ENCODE measurements at regions of chr17 and their contacts with region 1.

Region 1: DNA sequence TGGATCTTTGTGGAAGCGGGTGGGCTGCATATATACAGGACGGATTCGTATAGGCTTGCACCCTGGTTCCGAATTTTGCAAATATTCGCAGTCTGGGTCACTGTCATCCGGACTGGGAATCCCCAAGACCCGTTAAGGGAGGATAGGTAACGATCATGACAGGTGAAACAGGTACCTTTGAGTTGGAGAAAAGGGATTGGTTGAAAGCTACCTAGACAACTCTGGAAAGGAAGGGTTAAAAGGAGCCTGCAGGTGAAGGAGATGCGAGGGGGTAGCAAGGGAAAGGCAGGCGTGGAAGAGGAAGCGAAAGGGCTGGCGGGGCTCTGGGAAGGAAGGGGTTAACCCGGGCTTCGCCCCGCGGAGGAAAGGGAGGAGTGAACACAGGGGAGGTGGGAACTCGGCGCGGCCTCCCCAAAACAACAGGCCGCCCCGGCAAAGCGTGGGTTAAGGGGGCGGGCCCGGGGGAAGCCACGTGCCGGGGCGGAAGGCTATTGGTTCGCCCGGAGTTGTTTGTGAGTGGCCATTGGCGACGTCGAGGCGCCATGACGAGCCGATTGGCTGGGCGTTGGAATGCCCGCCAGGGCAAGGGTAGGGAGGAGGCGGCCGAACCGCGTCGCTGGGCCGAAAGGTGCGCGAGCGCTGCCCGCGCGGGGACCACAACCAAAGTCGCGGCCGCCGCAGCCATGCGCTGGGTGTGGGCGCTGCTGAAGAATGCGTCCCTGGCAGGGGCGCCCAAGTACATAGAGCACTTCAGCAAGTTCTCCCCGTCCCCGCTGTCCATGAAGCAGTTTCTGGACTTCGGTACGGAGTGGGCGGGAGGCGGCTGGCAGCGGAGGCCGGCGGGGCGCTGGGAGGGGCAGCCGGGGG is at the start of gene PDK2:
- DNase-seq: peak; percentile 97
- H3K4me3 Mint-ChIP-seq: peak within 1 kb of the TSS; percentile 85
- H3K27ac Mint-ChIP-seq: peak within 1 kb of the TSS; percentile 88
- H3K4me1 Mint-ChIP-seq: peaks cover 23% of the 10 kb centered on the region
- H3K27me3 Mint-ChIP-seq: peaks cover 2% of the 10 kb centered on the region
- total RNA-seq, gene PDK2: 13.7 and 16.9 TPM in 2 replicates

Region 2: DNA sequence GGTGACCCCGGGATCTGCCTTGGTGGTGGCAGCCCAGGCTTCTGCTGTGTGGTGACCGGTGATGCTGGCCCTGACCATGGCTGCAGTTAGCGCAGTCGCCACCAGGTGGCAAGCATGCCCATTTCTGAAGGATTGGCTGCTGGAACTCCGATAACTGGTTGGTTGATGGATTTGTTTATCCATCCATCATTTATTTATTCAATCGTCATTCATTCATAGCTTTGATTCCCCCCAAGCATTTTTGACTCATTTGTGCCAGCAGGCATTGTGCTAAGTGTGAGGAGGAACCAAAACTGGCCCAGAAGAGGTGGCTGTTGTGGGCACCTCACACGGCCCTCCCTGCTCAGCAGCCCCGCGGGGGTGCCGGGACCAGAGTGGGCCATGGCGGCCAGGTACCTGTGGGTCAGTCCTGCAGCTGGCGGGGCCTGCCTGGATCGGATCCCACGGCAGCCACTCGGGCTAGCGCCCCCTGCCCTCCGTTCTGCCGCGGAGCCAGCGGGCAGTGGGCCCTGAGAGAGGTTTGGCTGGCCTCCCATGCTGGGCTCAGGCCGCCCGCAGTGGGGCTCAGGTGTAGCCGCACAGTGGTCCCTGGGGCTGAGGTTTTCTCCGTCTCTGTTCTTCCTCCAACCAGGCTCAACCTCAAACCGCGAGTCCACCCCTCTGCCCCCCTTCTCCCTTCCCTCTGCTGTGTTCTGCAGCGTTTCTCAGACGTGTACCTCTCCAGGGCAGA is 67.9 kb before region 1 on chr17:
- intact Hi-C with region 1: loop called (anchors 2 kb)
- DNase-seq: peak; percentile 61
- H3K4me3 Mint-ChIP-seq: peak overlapping the region; percentile 75
- H3K27ac Mint-ChIP-seq: no peak overlapping the region
- H3K4me1 Mint-ChIP-seq: peaks cover 9% of the 10 kb centered on the region
- H3K27me3 Mint-ChIP-seq: peaks cover 9% of the 10 kb centered on the region

Region 3: DNA sequence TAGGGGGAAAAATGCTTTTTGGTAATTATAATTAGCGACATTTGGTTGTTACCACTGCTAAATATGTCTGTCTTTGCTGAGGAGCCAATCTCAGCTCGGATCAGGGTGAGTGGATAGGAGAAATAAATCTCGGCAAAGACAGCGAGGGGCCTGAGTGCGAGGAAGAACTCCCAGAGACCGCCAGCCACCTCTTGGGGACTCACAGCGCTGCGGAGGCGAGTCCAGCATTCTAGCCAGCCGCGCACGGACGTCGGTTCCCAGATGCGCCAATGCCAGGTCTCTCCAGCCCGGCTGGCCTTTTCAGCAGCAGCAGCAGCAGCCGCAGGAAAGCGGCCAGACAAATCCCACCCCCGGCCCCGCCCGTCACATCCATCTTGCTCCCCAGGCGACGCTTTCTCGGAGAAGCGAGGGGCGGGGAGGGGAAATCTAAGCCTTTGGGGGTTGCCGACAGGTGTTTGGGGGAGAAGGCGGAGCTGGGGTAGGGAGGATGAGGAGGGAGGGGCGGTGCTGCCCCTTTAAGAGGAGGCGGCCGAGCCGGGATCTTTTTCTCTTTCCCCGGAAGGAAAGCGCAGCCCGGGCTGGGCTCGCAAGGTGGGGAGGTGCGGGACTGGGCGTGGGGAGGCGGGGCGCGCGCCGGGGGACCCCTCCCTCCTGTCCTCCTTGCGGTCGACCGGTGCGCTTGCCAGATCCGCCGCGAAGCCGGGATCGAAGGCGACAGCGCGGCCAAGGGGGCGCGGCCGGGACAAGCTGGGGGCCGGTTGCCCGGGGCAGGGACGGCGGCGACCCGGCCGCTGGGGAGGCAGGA is 39.4 kb before region 1 on chr17 and contains the start of gene ITGA3:
- intact Hi-C with region 1: loop called (anchors 1 kb)
- DNase-seq: peak; percentile 67
- H3K4me3 Mint-ChIP-seq: peak within 1 kb of the TSS; percentile 89
- H3K27ac Mint-ChIP-seq: peak within 1 kb of the TSS; percentile 74
- H3K4me1 Mint-ChIP-seq: peaks cover 63% of the 10 kb centered on the region
- H3K27me3 Mint-ChIP-seq: no peaks in the 10 kb centered on the region
- total RNA-seq, gene ITGA3: 18.0 and 20.6 TPM in 2 replicates

Region 4: DNA sequence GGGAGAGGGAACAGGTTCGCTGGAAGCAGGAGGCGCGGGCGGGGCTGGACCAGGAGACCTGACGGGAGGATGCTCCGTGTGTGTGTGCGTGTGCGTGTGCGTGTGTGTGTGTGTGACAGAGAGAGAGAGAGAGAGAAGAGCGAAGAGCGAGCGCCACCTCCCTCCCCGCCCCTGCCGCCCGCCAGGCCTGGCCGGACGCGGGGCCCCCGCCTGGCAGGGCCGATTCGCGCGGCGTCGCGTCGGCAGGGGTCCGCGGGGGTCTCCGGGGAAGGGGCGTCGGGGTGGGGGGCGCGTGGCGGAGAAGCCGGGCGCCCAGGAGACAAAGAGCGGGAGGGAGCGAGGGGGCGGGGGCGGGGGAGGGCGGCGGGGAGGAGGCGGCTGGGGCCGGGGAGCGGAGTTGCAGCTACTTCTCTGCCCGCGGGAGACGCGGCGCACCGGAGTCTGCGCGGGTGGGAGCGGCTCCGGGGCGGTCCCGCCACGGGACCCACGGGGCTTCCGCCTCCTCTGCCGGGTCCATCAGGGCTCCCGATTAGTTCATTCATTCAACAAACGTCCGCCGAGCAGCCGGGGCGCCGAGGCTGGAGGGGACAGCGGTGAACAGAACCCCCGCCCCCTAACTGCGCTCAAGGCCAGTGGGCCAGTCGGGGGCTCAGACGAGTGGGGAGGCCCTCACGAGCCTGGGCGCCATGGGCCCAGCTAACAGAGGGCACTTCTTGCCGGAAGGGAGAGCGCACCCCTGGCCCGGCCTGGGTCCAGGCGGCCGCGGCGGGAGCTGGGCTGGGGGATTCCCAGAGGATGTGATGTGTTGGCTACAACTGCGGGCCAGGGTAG is 35.0 kb after region 1 on chr17 and contains the start of gene SAMD14:
- intact Hi-C with region 1: loop called (anchors 2 kb)
- DNase-seq: peak; percentile 52
- H3K4me3 Mint-ChIP-seq: peak within 1 kb of the TSS; percentile 83
- H3K27ac Mint-ChIP-seq: peak within 1 kb of the TSS; percentile 80
- H3K4me1 Mint-ChIP-seq: peaks cover 37% of the 10 kb centered on the region
- H3K27me3 Mint-ChIP-seq: peaks cover 26% of the 10 kb centered on the region
- total RNA-seq, gene SAMD14: 1.6 and 3.6 TPM in 2 replicates

Region 5: DNA sequence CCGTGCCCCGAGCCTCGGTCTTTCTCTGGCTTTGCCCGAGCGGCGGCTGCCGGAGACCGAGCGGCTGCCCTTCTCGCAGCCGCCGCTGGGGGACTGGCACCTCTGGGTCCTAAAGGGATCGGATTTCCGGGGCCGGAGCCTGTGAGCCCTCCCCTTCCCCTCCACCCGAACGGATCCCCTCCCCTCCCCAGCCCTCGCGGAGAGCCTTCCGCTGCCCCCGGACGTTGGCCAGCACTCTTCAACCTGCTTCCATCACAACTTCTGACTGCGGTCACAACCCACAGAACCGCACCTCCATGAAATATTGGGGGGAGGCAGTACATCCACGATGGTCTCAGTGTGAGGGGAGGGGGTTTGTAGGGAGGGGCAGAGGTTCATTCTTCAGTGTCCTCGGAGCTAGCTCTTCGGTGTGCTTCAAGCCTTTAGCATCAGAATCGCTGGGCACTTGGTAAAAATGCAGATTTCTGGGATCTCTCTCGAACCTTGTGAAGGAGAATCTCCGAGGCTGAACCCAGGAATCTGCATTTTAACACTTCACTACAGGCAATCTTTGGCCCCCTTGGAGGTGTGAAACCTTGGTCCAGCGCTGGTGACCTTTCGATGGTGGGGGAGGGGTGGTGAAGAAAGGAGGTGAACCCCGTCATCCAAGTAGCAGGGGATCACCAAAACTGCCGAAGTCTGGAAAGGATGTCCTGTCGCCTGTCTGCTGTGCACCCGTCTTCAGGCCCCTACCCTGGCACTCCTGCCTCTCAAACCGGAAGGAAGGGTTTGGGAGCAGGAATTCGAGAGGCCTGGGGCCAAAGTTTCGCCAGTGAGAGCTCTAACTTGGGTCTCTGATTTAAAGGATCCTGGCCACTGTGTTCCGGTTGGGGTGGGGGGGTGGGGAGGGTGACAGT is 56.3 kb after region 1 on chr17:
- intact Hi-C with region 1: loop called (anchors 1 kb)
- DNase-seq: peak; percentile 86
- H3K4me3 Mint-ChIP-seq: peak overlapping the region; percentile 92
- H3K27ac Mint-ChIP-seq: peak overlapping the region; percentile 95
- H3K4me1 Mint-ChIP-seq: peaks cover 41% of the 10 kb centered on the region
- H3K27me3 Mint-ChIP-seq: no peaks in the 10 kb centered on the region

Region 6: GRCh38 chr17:50161023-50161910 is 66.3 kb after region 1 on chr17:
- intact Hi-C with region 1: loop called (anchors 2 kb)
- DNase-seq: peak; percentile 96
- H3K4me3 Mint-ChIP-seq: peak overlapping the region; percentile 67
- H3K27ac Mint-ChIP-seq: peak overlapping the region; percentile 96
- H3K4me1 Mint-ChIP-seq: peaks cover 39% of the 10 kb centered on the region
- H3K27me3 Mint-ChIP-seq: no peaks in the 10 kb centered on the region

Region 7: DNA sequence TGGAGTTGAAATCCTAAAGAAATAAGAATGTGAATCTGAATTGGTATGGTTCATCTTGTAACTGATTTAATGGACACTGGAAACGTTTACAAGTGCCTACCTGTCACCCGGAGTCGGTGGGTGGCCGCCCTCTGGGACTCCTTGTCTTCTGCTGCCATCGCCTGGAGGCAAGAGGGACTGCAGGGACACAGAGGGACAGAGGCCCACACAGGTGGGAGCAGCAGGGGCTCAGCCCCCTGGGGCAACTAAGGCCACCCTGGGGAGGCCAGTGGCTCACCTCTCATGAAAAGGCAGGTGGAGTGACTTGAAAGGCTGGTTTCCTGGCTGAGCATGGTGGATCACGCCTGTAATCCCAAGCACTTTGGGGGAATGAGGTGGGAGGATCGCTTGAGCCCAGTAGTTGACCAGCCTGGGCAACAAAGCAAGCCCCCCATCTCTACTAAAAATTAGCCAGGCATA is 202.4 kb after region 1 on chr17:
- intact Hi-C with region 1: loop called (anchors 1 kb)
- DNase-seq: peak; percentile 69
- H3K4me3 Mint-ChIP-seq: no peak overlapping the region
- H3K27ac Mint-ChIP-seq: no peak overlapping the region
- H3K4me1 Mint-ChIP-seq: peaks cover 8% of the 10 kb centered on the region
- H3K27me3 Mint-ChIP-seq: peaks cover 3% of the 10 kb centered on the region